Naive thymus-derived CD4-positive, alpha-beta T cell (primary cell): ENCODE measurements at regions of chrX and their contacts with region 1.

Region 1: DNA sequence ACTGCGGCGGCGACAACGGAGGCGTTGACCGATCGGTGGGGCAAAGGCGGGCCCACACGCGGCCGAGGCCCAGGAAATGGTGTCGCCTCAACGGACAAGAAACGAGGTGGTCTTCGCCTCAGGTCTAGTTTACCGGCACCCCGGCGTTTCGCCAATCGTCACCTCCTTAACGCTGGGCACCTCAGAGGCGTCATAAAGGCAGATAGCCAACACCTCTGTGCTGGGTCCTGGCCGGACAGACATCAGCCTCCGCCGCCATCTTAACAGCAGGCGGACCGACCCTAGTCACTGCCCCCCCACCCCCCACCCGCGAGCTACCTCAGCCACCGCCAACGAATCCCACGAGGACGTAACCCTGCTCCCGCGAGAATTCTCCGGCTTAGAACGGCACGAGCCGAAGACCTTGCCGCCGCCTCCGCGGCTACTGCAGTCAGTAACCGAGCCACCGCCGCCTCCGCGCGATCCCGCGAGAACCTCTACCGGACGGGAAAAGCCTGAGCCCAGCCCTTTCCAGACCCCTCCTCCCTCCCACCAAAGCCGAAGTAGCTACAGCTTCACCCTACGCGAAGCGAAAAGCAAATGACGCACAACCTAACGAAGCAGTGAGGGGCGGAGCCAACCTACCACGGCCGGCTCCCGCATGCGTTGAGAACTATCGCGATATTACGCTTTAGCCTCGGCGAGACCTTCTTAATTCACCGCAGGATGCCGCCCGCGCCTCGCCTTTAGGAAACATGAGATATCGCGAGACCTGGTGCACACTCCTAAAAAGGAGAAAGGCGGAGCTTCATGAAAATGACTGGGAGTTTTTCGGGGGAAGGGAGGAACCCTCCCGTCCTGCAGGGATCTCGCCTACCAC is 2.7 kb downstream of the HUWE1 start:
- DNase-seq: peak; percentile 65 to 96 (median 92)
- ATAC-seq: peak; percentile 88
- H3K4me3 ChIP-seq: peak overlapping the region; percentile 71
- H3K4me3 Mint-ChIP-seq: peak overlapping the region; percentile 88 to 97 (median 93)
- H3K27ac ChIP-seq: peak overlapping the region; percentile 95
- H3K27ac Mint-ChIP-seq: peak overlapping the region; percentile 93 to 98 (median 96)
- H3K4me1 ChIP-seq: peaks cover 5 to 12% of the 10 kb centered on the region in 2 donors
- H3K4me1 Mint-ChIP-seq: peaks cover 9 to 51% (median 35%) of the 10 kb centered on the region in 7 donors
- H3K27me3 ChIP-seq: no peaks in the 10 kb centered on the region
- H3K27me3 Mint-ChIP-seq: no peaks in the 10 kb centered on the region

Region 2: DNA sequence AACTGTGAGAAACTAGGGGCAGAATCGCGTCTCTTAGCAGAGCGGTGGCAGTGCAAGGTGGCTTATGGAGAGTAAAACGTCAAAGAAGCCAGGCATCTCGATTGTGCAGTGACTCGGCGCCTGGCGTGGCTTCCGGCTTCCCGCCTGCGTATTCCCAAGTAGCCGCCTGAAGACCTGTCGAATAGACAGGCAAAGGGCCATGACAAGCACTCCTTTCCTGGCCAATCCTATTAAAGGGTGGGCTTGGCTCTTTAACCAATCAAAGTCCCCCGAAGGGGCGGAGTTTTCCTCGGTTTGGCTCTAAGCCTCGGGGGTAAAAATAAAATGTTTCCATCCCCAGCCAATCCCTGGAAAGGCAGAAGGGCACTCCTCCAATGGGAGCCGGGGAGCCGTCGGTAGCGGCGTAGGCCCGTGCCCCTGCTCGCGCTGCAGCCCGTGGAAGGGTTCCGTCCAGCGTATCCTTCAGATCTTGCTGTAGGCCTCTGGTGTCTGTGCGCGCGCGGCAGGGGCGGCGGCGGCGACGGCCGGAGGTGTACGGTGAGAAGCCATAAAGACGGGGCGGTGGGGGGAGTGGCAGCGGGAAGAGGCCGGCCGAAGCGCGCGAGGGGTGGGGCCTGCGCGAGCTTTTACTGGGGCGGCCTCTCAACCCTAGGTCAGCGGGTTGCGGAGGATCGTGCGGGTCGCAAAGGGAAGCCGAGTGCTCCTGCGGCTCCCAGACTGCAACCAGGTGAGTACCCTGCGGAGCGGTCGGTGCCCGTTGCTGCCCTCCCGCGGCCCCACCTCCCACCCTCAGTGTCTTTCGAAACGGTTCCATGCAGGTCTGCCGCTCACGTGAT is 589.8 kb before region 1 on chrX and contains the start of gene KANTR:
- CTCF ChIA-PET with region 1: no interaction called
- POLR2A ChIA-PET with region 1: no interaction called
- intact Hi-C with region 1: loop called (anchors 5 to 10 kb)
- DNase-seq: peak; percentile 47 to 88 (median 83)
- ATAC-seq: peak; percentile 88
- H3K4me3 ChIP-seq: peak within 1 kb of the TSS; percentile 93
- H3K4me3 Mint-ChIP-seq: peak within 1 kb of the TSS; percentile 82 to 93 (median 88)
- H3K27ac ChIP-seq: peak within 1 kb of the TSS; percentile 73
- H3K27ac Mint-ChIP-seq: peak within 1 kb of the TSS; percentile 80 to 94 (median 91)
- H3K4me1 ChIP-seq: no peaks in the 10 kb centered on the region
- H3K4me1 Mint-ChIP-seq: peaks cover 9 to 27% (median 20%) of the 10 kb centered on the region in 7 donors
- H3K27me3 ChIP-seq: no peaks in the 10 kb centered on the region
- H3K27me3 Mint-ChIP-seq: no peaks in the 10 kb centered on the region
- total RNA-seq, gene KANTR: 12.5 to 29.9 (median 16.9) TPM

Region 3: DNA sequence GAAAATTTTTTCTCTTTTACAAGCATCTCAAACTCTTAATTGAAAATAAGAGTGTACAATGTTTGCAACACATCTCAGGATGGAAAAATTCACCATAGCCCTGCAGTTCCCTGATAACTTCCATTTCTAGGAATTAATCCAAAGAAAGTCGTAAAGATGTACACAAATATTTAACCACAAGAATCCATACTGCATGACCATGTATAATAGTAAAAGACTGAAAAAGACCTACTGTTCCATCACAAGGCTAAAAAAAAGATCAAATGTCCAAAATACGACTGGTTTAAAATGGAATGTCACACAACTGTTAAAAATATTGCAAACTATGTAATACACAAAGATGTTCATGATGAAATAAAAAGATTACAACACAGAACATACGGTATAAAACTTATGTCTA is 29.4 kb before region 1 on chrX:
- CTCF ChIA-PET with region 1: no interaction called
- POLR2A ChIA-PET with region 1: no interaction called
- intact Hi-C with region 1: no loop called
- DNase-seq: no peak
- ATAC-seq: no peak
- H3K4me3 ChIP-seq: no peak overlapping the region
- H3K4me3 Mint-ChIP-seq: no peak overlapping the region
- H3K27ac ChIP-seq: no peak overlapping the region
- H3K27ac Mint-ChIP-seq: peak overlapping the region in 2 of 9 donors; percentile 10 to 21
- H3K4me1 ChIP-seq: peaks cover 0 to 3% of the 10 kb centered on the region in 2 donors
- H3K4me1 Mint-ChIP-seq: peaks cover 5 to 49% (median 44%) of the 10 kb centered on the region in 7 donors
- H3K27me3 ChIP-seq: no peaks in the 10 kb centered on the region
- H3K27me3 Mint-ChIP-seq: no peaks in the 10 kb centered on the region

Region 4: DNA sequence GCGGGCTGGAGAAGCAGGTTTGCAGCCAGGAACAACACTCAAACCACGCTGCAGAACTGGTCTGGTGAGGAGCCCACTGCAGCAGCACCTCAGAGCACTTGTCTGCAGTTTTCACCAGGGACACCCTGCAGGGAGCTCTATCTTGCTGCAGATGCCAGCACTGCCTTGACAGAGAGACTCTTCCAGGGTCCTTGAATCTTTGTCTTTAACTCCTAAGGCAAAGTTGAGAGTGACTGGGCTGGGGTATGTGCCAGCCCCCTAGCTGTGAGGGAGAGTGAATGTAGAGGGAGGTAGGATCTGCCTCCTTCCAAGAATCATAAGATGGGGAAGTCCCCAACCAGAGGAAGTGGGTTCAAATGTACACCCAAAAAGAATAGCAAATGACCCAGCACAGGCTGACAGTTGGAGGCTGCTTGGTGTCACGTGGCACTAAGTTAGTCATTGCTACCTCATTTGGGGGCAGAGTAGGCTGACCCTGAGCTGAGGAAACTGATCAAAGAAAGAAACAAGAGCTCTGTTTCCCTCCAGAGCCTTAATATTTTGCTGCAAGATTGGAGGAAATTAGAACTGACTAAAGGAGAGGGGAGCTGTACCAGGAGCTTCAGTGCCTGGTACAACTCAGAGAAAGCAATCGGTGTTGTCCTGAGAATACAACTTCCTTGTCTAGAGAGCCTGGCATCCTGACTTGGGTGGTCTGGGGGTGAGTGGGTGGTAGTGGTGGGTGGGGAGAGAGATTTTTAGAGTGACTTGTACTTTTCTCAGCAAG is 31.0 kb after region 1 on chrX:
- CTCF ChIA-PET with region 1: interaction called, 5 read pairs
- POLR2A ChIA-PET with region 1: interaction called, 48 read pairs
- intact Hi-C with region 1: loop called (anchors 1 kb)
- DNase-seq: peak; percentile 7 to 59 (median 41)
- ATAC-seq: peak; percentile 84
- H3K4me3 ChIP-seq: peak overlapping the region; percentile 39
- H3K4me3 Mint-ChIP-seq: peak overlapping the region; percentile 61 to 92 (median 78)
- H3K27ac ChIP-seq: peak overlapping the region; percentile 78
- H3K27ac Mint-ChIP-seq: peak overlapping the region; percentile 84 to 98 (median 89)
- H3K4me1 ChIP-seq: peaks cover 30 to 42% of the 10 kb centered on the region in 2 donors
- H3K4me1 Mint-ChIP-seq: peaks cover 25 to 53% (median 51%) of the 10 kb centered on the region in 7 donors
- H3K27me3 ChIP-seq: no peaks in the 10 kb centered on the region
- H3K27me3 Mint-ChIP-seq: no peaks in the 10 kb centered on the region

Region 5: DNA sequence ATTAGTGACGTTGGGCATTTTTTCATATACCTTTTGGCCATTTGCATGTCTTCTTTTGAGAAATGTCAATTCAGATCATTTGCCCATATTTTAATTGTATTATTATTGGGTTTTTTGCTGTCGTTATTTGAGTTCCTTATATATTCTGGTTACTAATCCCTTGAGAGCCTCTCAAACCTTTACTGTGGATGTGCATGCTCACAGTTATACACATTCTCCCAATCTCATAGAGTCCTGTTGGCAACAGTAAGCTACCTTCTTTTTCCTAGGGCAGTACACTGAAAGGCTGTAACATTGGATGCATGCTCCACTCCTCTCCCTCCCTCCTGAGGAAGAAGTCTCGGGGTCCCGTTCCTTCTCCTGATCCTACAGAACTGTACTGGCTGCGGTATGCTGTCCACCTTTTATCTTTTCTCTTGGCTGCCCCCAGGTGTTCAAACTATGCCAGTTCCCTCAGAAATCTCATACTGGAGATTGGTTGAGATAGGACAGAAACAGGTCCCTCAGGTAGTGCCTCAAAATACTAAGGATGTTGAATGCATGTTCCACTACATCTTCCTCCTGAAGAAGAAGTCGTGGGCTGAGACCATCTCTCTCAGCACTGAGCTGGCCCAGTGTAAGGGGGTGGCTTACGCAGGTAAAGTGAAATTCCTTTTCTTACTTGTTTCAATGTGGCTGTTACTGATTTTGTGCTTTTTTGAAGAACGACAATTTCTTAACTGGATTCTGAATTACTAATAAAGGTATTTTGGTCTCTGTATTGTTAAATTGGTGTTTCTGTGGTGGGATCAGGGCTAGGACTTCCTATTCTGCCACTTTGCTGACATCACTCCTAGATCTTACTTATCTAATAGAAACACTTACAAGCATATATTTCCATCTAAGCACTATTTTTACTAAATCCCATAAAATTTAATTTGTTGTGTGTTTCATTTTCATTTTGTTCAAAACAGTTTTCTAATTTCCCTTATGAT is 148.2 kb after region 1 on chrX:
- CTCF ChIA-PET with region 1: interaction called, 4 read pairs
- POLR2A ChIA-PET with region 1: interaction called, 4 read pairs
- intact Hi-C with region 1: loop called (anchors 1 kb)
- DNase-seq: peak in 8 of 9 donors; percentile 12 to 45 (median 32)
- ATAC-seq: peak; percentile 71
- H3K4me3 ChIP-seq: no peak overlapping the region
- H3K4me3 Mint-ChIP-seq: peak overlapping the region in 1 of 10 donors; percentile 56
- H3K27ac ChIP-seq: no peak overlapping the region
- H3K27ac Mint-ChIP-seq: no peak overlapping the region
- H3K4me1 ChIP-seq: no peaks in the 10 kb centered on the region
- H3K4me1 Mint-ChIP-seq: peaks cover 0 to 16% (median 4%) of the 10 kb centered on the region in 7 donors
- H3K27me3 ChIP-seq: no peaks in the 10 kb centered on the region
- H3K27me3 Mint-ChIP-seq: no peaks in the 10 kb centered on the region

Region 6: GRCh38 chrX:54357414-54358377 is 673.9 kb after region 1 on chrX and contains the start of gene WNK3:
- CTCF ChIA-PET with region 1: no interaction called
- POLR2A ChIA-PET with region 1: no interaction called
- intact Hi-C with region 1: loop called in 1 of 2 experiments (anchors 10 kb)
- DNase-seq: peak; percentile 9 to 48 (median 35)
- ATAC-seq: peak; percentile 72
- H3K4me3 ChIP-seq: peak within 1 kb of the TSS; percentile 52
- H3K4me3 Mint-ChIP-seq: peak within 1 kb of the TSS; percentile 75 to 92 (median 88)
- H3K27ac ChIP-seq: no peak within 1 kb of the TSS
- H3K27ac Mint-ChIP-seq: peak within 1 kb of the TSS; percentile 22 to 85 (median 58)
- H3K4me1 ChIP-seq: no peaks in the 10 kb centered on the region
- H3K4me1 Mint-ChIP-seq: peaks cover 7 to 25% (median 20%) of the 10 kb centered on the region in 7 donors
- H3K27me3 ChIP-seq: no peaks in the 10 kb centered on the region
- H3K27me3 Mint-ChIP-seq: peaks cover 0 to 52% (median 21%) of the 10 kb centered on the region in 5 donors
- total RNA-seq, gene WNK3: 0.15 to 0.95 (median 0.67) TPM